Activated B cell treated with CpG ODN at 0.5 μM for 24 hours (primary cell): ENCODE measurements at regions of chr1 and their contacts with region 1.

Region 1: DNA sequence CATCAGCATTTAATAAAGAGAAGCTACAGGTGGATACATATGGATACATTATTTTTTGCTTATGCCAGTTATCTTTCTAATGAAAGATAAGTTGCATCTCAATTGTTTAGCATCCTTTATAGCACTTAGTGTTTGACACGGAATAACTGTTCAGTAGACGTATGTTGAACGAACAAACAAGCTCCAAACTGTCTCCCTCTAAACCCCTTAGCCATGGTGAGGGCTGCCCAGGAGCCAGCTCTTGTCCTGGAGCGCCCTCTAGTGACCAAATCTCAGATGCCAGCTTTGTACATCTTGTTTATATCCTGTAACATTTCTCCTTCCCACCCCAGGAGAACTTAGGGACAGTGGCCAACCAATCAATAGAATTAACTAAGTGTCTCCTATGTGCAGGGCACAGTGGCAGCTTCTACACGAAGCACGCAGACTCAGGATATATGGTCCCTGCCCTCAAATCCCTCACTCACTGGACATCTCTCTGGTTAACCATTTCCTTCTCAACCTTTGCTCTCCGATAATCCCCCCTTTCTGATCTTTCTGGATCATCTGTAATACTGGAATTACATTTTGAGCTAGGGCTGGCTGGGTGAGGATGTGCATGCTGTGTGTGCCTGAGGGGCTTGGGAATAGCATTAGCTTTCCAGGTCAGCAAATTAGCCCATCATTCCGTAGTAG is 22.9 kb downstream of the KCNA10 start:
- DNase-seq: peak; percentile 50
- ATAC-seq: peak; percentile 86
- H3K4me3 Mint-ChIP-seq: no peak overlapping the region
- H3K27ac Mint-ChIP-seq: no peak overlapping the region
- H3K4me1 Mint-ChIP-seq: no peaks in the 10 kb centered on the region
- H3K27me3 Mint-ChIP-seq: no peaks in the 10 kb centered on the region
- CTCF ChIP-seq: no peak

Region 2: GRCh38 chr1:110053557-110054428 is 442.3 kb before region 1 on chr1:
- CTCF ChIA-PET with region 1: interaction called, 8 read pairs
- POLR2A ChIA-PET with region 1: no interaction called
- intact Hi-C with region 1: loop called (anchors 1 kb)
- DNase-seq: peak; percentile 68
- ATAC-seq: peak; percentile 85
- H3K4me3 Mint-ChIP-seq: no peak overlapping the region
- H3K27ac Mint-ChIP-seq: no peak overlapping the region
- H3K4me1 Mint-ChIP-seq: no peaks in the 10 kb centered on the region
- H3K27me3 Mint-ChIP-seq: no peaks in the 10 kb centered on the region
- CTCF ChIP-seq: peak; percentile 50

Region 3: DNA sequence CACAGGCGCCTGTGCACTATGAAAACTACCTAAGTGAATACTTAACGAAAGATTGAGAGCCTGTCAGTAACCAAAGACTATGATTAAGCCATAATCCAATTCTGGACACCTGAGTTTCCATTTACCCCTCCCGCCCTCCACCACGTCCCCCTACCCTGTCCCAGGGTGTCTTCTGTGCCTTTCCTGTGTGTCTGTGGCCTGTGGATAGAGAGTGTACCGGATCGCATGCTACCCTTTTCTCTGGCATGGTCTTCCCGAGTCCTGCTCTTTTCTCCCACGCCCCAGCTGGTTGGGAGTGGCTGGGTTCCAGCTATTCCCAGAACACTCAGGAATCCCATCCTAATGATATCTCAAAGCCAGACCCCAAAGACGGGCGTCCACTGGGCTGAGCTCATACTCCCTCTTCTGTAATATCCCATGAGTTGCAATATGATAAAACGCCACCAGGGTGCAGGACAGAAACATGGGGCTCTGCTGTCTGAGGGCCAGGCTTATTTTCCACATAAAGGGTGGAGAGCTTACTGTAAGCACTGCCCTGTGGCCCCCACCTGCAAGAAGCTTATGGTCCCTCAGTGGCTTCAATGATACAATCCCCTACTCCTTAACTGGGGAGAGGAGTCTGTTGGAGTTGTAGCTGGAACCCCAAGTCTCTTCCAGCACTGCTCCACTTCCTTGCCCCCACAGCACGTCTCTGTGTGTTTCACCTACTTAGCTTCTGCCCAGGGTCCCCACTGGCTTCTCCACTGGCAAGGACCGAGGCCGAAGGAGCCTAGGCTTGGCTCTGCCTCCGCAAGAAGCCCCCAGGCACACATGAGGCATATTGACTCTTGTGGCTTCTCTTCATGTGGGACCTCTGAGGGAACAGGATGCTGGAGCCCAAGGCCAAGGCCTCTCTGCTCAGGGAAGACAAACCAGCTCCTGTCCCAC is 408.0 kb before region 1 on chr1:
- CTCF ChIA-PET with region 1: interaction called, 10 read pairs
- POLR2A ChIA-PET with region 1: no interaction called
- intact Hi-C with region 1: no loop called
- DNase-seq: no peak
- ATAC-seq: peak; percentile 75
- H3K4me3 Mint-ChIP-seq: no peak overlapping the region
- H3K27ac Mint-ChIP-seq: no peak overlapping the region
- H3K4me1 Mint-ChIP-seq: peaks cover 9% of the 10 kb centered on the region
- H3K27me3 Mint-ChIP-seq: peaks cover 21% of the 10 kb centered on the region
- CTCF ChIP-seq: no peak

Region 4: GRCh38 chr1:110196917-110197765 is 298.9 kb before region 1 on chr1:
- CTCF ChIA-PET with region 1: interaction called, 72 read pairs
- POLR2A ChIA-PET with region 1: no interaction called
- intact Hi-C with region 1: loop called (anchors 1 kb)
- DNase-seq: no peak
- ATAC-seq: peak; percentile 98
- H3K4me3 Mint-ChIP-seq: no peak overlapping the region
- H3K27ac Mint-ChIP-seq: no peak overlapping the region
- H3K4me1 Mint-ChIP-seq: peaks cover 3% of the 10 kb centered on the region
- H3K27me3 Mint-ChIP-seq: no peaks in the 10 kb centered on the region
- CTCF ChIP-seq: peak; percentile 36

Region 5: GRCh38 chr1:110203021-110203661 is 292.9 kb before region 1 on chr1:
- CTCF ChIA-PET with region 1: interaction called, 72 read pairs
- POLR2A ChIA-PET with region 1: interaction called, 6 read pairs
- intact Hi-C with region 1: loop called (anchors 1 kb)
- DNase-seq: no peak
- ATAC-seq: peak; percentile 74
- H3K4me3 Mint-ChIP-seq: no peak overlapping the region
- H3K27ac Mint-ChIP-seq: no peak overlapping the region
- H3K4me1 Mint-ChIP-seq: peaks cover 12% of the 10 kb centered on the region
- H3K27me3 Mint-ChIP-seq: no peaks in the 10 kb centered on the region
- CTCF ChIP-seq: peak; percentile 37

Region 6: DNA sequence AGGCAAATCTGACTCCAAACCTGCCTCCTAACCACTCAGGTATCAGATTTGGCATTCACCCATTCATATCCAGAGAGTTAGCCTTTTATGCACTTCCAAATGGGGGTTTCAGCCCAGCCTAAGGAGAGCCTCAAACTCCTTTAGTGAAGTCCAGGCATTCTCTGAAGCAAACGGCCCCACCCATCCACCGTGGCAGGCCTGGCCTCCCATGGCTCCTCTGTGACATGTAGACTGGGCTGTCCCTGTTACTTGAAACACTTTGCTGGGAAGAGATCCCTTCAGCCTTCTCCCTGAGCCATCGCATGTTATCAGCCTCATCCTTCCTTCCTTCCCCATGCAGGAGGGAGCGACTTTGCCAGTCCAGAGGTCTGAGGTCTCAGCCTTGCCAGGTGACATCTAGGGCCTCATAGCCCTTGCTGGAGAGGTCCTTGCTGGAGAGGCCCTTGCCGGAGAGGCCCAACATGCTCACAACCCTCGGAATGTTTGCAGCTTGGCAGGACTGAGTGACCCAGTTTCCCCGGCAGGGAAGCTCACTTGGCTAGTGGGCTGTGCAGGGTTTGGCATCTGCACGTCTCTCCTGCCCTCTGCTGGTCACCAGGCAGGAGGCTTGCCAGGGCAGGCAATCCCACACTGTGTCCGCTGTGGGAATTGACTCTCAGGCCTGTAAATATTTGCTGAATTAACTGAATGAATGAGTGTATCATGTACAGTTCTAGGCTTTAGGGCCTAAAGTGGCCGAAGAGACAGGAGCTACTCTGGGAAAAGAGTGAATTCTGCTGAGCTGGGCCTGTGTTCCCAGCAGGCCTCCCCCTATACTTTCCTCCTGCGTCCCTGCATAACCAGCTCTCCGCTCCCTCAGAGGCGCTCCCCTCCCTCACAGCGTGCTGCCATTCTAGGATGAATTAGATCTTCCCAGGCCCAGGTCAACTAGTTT is 183.6 kb before region 1 on chr1:
- CTCF ChIA-PET with region 1: interaction called, 10 read pairs
- POLR2A ChIA-PET with region 1: no interaction called
- intact Hi-C with region 1: no loop called
- DNase-seq: peak; percentile 52
- ATAC-seq: peak; percentile 99
- H3K4me3 Mint-ChIP-seq: no peak overlapping the region
- H3K27ac Mint-ChIP-seq: no peak overlapping the region
- H3K4me1 Mint-ChIP-seq: peaks cover 3% of the 10 kb centered on the region
- H3K27me3 Mint-ChIP-seq: no peaks in the 10 kb centered on the region
- CTCF ChIP-seq: peak; percentile 43

Region 7: GRCh38 chr1:110412576-110412975 is 83.5 kb before region 1 on chr1:
- CTCF ChIA-PET with region 1: interaction called, 17 read pairs
- POLR2A ChIA-PET with region 1: no interaction called
- intact Hi-C with region 1: loop called (anchors 1 kb)
- DNase-seq: peak; percentile 56
- ATAC-seq: peak; percentile 66
- H3K4me3 Mint-ChIP-seq: peak overlapping the region; percentile 66
- H3K27ac Mint-ChIP-seq: peak overlapping the region; percentile 67
- H3K4me1 Mint-ChIP-seq: peaks cover 23% of the 10 kb centered on the region
- H3K27me3 Mint-ChIP-seq: no peaks in the 10 kb centered on the region
- CTCF ChIP-seq: no peak

Region 8: GRCh38 chr1:110424699-110425611 is 71.1 kb before region 1 on chr1:
- CTCF ChIA-PET with region 1: no interaction called
- POLR2A ChIA-PET with region 1: no interaction called
- intact Hi-C with region 1: no loop called
- DNase-seq: no peak
- ATAC-seq: no peak
- H3K4me3 Mint-ChIP-seq: no peak overlapping the region
- H3K27ac Mint-ChIP-seq: no peak overlapping the region
- H3K4me1 Mint-ChIP-seq: no peaks in the 10 kb centered on the region
- H3K27me3 Mint-ChIP-seq: peaks cover 8% of the 10 kb centered on the region
- CTCF ChIP-seq: no peak

Region 9: GRCh38 chr1:111110197-111110899 is 614.3 kb after region 1 on chr1:
- CTCF ChIA-PET with region 1: no interaction called
- POLR2A ChIA-PET with region 1: no interaction called
- intact Hi-C with region 1: no loop called
- DNase-seq: no peak
- ATAC-seq: no peak
- H3K4me3 Mint-ChIP-seq: no peak overlapping the region
- H3K27ac Mint-ChIP-seq: no peak overlapping the region
- H3K4me1 Mint-ChIP-seq: peaks cover 17% of the 10 kb centered on the region
- H3K27me3 Mint-ChIP-seq: no peaks in the 10 kb centered on the region
- CTCF ChIP-seq: no peak